CD8-positive, alpha-beta T cell (primary cell): ENCODE measurements at regions of chr5 and their contacts with region 1.

Region 1: GRCh38 chr5:110625376-110625999 is 101.0 kb downstream of the TMEM232 start:
- DNase-seq: peak in 2 of 9 experiments; percentile 15 to 42
- ATAC-seq: no peak
- H3K4me3 ChIP-seq: no peak overlapping the region
- H3K4me3 Mint-ChIP-seq: no peak overlapping the region
- H3K27ac ChIP-seq: no peak overlapping the region
- H3K27ac Mint-ChIP-seq: no peak overlapping the region
- H3K4me1 ChIP-seq: no peaks in the 10 kb centered on the region
- H3K4me1 Mint-ChIP-seq: no peaks in the 10 kb centered on the region
- H3K27me3 ChIP-seq: peaks cover 0 to under 1% of the 10 kb centered on the region in 2 experiments
- H3K27me3 Mint-ChIP-seq: peaks cover 3% of the 10 kb centered on the region
- CTCF ChIP-seq: peak; percentile 74

Region 2: DNA sequence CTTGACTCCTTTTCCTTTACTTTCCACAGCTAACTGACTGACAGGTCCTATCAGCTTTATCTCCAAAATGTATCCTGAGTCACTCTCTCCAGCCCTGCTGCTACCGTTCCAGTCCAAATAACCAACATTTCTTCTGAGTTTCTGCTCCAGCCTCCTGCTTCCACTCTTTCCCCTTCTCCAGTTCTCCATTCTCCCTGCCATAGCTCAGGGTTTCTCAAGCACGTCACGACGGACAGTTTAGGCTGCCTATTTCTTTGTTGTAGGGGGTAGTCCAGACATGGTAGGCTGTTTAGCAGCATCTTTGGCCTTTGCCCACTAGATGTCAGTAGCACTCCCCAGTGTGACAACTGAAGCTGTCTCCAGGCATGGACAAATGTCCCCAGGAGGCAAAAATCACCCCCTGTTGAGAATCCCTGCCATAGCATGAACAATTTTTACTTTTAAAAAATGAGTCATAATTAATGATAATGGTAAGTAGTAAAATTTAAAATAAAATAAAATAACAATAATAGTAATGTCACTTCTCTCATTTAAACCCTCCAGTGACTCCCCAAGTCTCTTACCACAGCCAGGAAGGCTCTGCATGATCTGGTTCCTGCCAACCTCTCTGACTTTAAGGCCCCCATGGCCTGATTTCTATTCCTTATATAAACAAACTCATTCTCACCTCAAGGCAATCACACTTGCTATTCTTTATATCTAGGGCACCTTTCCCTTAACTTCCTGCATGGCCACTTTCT is 1983.2 kb before region 1 on chr5:
- CTCF ChIA-PET with region 1: no interaction called
- POLR2A ChIA-PET with region 1: no interaction called
- intact Hi-C with region 1: loop called in 1 of 2 experiments (anchors 2 kb)
- DNase-seq: peak; percentile 12 to 66 (median 48)
- ATAC-seq: peak; percentile 71
- H3K4me3 ChIP-seq: no peak overlapping the region
- H3K4me3 Mint-ChIP-seq: no peak overlapping the region
- H3K27ac ChIP-seq: no peak overlapping the region
- H3K27ac Mint-ChIP-seq: no peak overlapping the region
- H3K4me1 ChIP-seq: no peaks in the 10 kb centered on the region
- H3K4me1 Mint-ChIP-seq: peaks cover 4% of the 10 kb centered on the region
- H3K27me3 ChIP-seq: no peaks in the 10 kb centered on the region
- H3K27me3 Mint-ChIP-seq: peaks cover 9% of the 10 kb centered on the region
- CTCF ChIP-seq: peak; percentile 78

Region 3: GRCh38 chr5:108681079-108681921 is 1944.2 kb before region 1 on chr5:
- CTCF ChIA-PET with region 1: no interaction called
- POLR2A ChIA-PET with region 1: no interaction called
- intact Hi-C with region 1: loop called in 1 of 2 experiments (anchors 1 kb)
- DNase-seq: peak in 3 of 9 experiments; percentile 20 to 69 (median 60)
- ATAC-seq: peak; percentile 73
- H3K4me3 ChIP-seq: no peak overlapping the region
- H3K4me3 Mint-ChIP-seq: no peak overlapping the region
- H3K27ac ChIP-seq: no peak overlapping the region
- H3K27ac Mint-ChIP-seq: no peak overlapping the region
- H3K4me1 ChIP-seq: no peaks in the 10 kb centered on the region
- H3K4me1 Mint-ChIP-seq: no peaks in the 10 kb centered on the region
- H3K27me3 ChIP-seq: no peaks in the 10 kb centered on the region
- H3K27me3 Mint-ChIP-seq: peaks cover 3% of the 10 kb centered on the region
- CTCF ChIP-seq: peak; percentile 68

Region 4: DNA sequence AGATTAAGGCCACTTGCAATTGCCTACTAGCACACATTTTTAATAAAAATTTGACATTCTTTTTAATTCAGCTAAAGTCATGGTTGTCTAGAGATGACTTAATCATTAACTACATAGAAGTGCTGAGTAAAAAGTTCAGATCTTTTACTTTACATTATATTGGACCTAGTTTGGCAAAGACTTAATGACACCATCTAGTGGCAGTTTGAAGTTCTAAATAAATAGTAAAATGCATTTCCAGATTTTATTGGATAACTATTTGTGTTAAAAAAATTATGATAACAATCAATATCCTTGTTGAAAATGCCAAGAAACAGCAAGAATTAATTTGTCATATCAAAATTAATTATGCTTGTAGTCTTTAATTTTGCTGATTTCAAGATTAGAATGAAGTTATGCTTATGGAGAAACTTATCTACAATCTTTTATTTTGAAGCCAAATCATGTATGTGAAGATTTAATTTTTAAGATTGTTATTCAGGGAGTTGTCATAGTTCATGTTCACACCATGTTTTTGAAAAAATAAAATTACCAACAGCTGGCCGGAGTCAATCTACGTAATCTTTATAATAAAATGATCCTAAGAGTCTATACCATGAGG is 1146.1 kb before region 1 on chr5:
- CTCF ChIA-PET with region 1: no interaction called
- POLR2A ChIA-PET with region 1: no interaction called
- intact Hi-C with region 1: loop called in 1 of 2 experiments (anchors 5 kb)
- DNase-seq: peak in 1 of 9 experiments; percentile 25
- ATAC-seq: no peak
- H3K4me3 ChIP-seq: no peak overlapping the region
- H3K4me3 Mint-ChIP-seq: no peak overlapping the region
- H3K27ac ChIP-seq: no peak overlapping the region
- H3K27ac Mint-ChIP-seq: no peak overlapping the region
- H3K4me1 ChIP-seq: no peaks in the 10 kb centered on the region
- H3K4me1 Mint-ChIP-seq: no peaks in the 10 kb centered on the region
- H3K27me3 ChIP-seq: no peaks in the 10 kb centered on the region
- H3K27me3 Mint-ChIP-seq: peaks cover 7% of the 10 kb centered on the region
- CTCF ChIP-seq: peak; percentile 37

Region 5: GRCh38 chr5:109589986-109590385 is 1035.5 kb before region 1 on chr5:
- CTCF ChIA-PET with region 1: interaction called, 9 read pairs
- POLR2A ChIA-PET with region 1: no interaction called
- intact Hi-C with region 1: loop called (anchors 1 to 5 kb)
- DNase-seq: peak in 2 of 9 experiments; percentile 31 to 49
- ATAC-seq: peak; percentile 40
- H3K4me3 ChIP-seq: no peak overlapping the region
- H3K4me3 Mint-ChIP-seq: no peak overlapping the region
- H3K27ac ChIP-seq: no peak overlapping the region
- H3K27ac Mint-ChIP-seq: no peak overlapping the region
- H3K4me1 ChIP-seq: peaks cover 10% of the 10 kb centered on the region
- H3K4me1 Mint-ChIP-seq: peaks cover 19% of the 10 kb centered on the region
- H3K27me3 ChIP-seq: no peaks in the 10 kb centered on the region
- H3K27me3 Mint-ChIP-seq: no peaks in the 10 kb centered on the region
- CTCF ChIP-seq: no peak